Brain microvascular endothelial cell (primary cell): ENCODE measurements at regions of chr1 and their contacts with region 1.

Region 1: DNA sequence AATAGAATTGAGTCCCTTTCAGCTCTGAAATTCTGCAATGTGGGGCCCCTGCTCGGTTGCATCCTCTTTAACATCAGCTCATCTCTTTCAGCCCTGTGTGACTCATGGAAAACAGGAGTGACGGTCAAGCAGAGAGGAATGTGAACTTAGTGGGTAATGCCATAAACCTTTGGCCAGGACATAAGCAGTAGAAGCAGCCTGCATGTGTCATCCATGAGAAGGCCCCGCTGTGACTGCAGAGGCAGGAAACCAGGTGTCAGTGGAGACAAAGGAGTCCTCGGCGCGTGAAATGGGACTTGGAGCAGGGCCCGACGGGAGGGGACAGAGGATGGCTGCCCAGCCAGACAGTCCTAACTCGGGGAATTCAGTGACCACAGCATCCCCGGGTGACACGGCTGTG is 21.1 kb upstream of the EPHB2 start:
- DNase-seq: peak; percentile 53
- H3K4me3 ChIP-seq: no peak overlapping the region
- H3K27ac ChIP-seq: no peak overlapping the region
- H3K27me3 ChIP-seq: peaks cover 2% of the 10 kb centered on the region
- CTCF ChIP-seq: no peak

Region 2: DNA sequence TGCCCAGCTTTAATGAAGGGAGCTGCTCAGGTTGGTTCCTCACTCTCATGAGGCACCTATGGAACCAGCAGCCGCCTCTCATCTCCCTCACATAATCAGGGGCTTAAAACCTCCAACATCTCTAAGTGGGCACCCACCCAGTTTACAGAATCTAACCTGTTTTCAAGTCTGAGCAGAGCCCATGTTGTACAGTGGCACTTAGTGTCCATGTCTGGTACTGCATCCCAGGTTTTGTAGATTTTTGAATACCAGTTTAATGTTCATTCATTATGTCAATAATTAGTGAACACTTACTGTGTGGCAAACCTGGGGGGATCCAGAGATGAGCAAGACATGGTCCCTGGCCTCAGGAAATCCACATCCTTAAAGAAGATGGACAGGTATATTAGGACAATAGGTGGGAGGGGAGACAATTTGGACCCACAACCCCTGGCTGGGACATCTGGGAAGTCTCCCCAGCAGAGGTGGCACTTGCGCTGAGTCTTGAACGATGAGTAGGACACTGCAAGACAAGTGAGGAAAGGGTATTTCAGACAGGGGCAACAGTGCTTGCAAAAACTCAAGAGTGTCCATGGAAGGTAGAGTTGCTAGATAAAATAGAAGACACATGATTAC is 199.8 kb after region 1 on chr1:
- in situ Hi-C with region 1: loop called (anchors 25 kb)
- DNase-seq: peak; percentile 41
- H3K4me3 ChIP-seq: no peak overlapping the region
- H3K27ac ChIP-seq: no peak overlapping the region
- H3K27me3 ChIP-seq: no peaks in the 10 kb centered on the region
- CTCF ChIP-seq: peak; percentile 82